ENCODE measurements at regions of chr5 and their contacts with region 1.

Region 1: DNA sequence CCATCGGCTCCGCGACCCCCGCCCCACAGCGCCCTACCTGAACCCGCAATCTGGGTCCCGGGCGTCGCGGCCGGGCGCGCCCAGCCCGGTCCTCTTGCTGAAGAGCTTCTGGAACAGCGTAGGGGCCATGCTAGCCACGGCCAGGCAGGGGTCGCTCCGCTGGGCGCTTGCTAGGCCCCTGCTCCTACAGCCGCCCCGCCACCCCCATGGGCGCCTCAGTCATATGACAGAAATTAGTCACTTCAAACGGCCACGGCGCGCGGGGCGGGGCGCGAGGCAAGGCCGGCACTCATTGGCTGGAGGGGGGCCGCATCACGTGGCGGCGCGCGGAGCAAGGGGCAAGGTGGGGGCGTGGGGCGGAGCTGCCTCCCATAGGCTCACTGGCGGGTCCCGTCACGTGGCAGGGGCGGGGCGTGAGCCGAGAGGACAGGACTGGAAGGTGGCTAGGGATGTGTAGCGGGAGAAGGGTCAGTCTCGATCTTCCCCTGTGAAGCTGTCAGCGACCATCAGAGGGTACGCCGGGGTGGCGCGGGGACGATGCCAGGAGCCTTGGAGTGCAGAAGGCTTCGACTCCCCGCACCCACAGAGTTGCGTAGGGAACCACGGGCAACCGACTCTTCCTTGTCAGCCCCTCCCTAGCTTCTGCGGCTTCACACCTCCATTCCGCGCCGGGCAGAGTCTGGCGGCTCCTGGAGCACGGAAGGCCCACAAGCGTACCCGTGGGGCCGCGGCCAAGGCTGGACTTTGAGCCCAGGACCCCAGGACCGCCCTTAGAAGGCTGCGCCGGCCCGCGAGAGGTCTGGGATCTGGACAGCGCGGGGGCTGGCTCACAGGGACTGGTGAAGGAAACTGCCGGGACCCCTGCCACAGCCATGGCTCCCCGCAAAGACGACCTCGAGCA is at the start of gene FNIP1:
- DNase-seq: peak; percentile 100
- H3K4me3 Mint-ChIP-seq: peak within 1 kb of the TSS; percentile 99
- H3K27ac Mint-ChIP-seq: peak within 1 kb of the TSS; percentile 95
- H3K4me1 Mint-ChIP-seq: peaks cover 30% of the 10 kb centered on the region
- H3K27me3 Mint-ChIP-seq: peaks cover 8% of the 10 kb centered on the region
- total RNA-seq, gene FNIP1: 15.8 and 17.5 TPM in 2 replicates

Region 2: DNA sequence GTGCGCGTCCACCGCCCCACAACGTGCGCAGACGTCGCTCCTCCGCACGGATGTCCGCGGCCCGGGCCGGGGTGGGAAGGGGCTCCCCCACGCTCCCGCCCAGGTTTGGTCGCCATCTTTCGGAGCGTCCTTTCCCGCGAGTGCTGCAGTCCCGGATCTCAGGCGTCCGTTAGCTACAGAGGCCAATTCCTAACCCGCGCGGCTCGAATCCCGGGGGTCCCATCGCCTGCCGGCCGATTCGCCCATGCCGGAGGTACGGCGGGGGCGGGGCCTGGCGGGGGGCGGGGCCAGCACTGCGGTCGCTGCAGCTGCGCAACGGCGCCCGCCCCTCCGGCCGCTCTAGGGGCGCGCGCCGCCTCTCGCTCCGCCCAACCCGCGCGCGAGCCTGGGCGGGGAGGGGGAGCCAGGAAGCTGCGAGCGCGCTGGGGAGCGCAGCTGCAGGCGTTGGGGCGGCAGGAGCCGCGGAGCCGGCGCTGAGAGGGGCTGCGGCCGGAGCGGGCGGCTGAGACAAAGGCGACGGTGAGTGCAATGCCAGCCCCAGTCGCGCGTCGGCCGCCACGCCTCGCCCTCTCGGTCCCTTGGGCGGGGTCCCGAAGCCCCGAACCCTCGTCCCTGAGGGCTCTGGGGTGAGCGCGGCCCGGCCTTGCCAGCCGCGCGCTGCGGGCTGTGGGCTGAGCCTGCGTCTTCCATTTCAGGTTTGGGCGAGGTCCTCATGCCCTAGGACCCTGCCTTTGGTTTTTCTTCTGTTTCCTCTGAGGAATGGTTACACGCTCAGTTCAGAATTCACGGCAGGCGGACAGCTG is 533.2 kb before region 1 on chr5 and contains the start of gene CDC42SE2:
- intact Hi-C with region 1: loop called (anchors 5 kb)
- DNase-seq: peak; percentile 97
- H3K4me3 Mint-ChIP-seq: peak within 1 kb of the TSS; percentile 85
- H3K27ac Mint-ChIP-seq: peak within 1 kb of the TSS; percentile 93
- H3K4me1 Mint-ChIP-seq: peaks cover 34% of the 10 kb centered on the region
- H3K27me3 Mint-ChIP-seq: no peaks in the 10 kb centered on the region
- total RNA-seq, gene CDC42SE2: 96.2 and 99.0 TPM in 2 replicates

Region 3: GRCh38 chr5:131536211-131536826 is 260.7 kb before region 1 on chr5:
- intact Hi-C with region 1: loop called (anchors 1 kb)
- DNase-seq: peak; percentile 72
- H3K4me3 Mint-ChIP-seq: peak overlapping the region; percentile 65
- H3K27ac Mint-ChIP-seq: peak overlapping the region; percentile 79
- H3K4me1 Mint-ChIP-seq: peaks cover 61% of the 10 kb centered on the region
- H3K27me3 Mint-ChIP-seq: no peaks in the 10 kb centered on the region

Region 4: DNA sequence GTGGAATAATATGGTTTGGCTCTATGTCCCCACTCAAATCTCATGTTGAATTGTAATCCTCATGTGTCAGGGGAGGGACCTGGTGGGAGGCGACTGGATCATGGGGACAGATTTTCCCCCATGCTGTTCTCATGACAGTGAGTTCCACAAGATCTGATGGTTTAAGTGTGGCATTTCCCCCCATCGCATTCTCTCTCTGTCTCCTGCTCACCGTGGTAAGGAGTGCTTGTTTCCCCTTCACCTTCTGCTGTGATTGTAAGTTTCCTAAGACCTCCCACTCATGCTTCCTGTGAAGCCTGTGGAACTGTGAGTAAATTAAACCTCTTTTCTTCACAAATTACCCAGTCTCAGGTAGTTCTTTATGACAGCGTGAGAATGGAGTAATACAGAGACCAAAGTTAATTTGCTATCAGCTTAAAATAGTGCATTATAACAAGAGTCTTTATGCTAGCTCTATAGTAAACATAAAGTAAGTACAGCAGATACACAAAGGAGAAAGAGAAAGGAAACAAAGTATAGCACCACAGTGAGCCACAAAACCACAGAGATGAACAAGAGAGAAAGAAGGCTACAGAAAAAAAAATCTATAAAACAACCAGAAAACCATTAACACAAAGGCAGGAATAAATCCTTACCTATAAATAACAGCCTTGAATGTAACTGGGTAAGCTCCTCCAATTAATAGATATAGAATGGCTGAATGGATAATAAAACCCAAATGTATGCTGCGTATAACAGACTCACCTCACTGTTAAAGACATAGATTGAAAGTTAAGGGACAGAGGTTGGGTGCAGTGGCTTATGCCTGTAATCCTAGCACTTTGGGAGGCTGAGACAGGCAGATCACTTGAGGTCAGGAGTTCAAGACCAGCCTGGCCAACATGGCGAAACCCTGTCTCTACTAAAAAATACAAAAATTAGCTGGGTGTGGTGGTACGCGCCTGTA is 201.7 kb before region 1 on chr5:
- intact Hi-C with region 1: loop called (anchors 2 kb)
- DNase-seq: peak; percentile 73
- H3K4me3 Mint-ChIP-seq: peak overlapping the region; percentile 55
- H3K27ac Mint-ChIP-seq: peak overlapping the region; percentile 73
- H3K4me1 Mint-ChIP-seq: peaks cover 43% of the 10 kb centered on the region
- H3K27me3 Mint-ChIP-seq: no peaks in the 10 kb centered on the region

Region 5: DNA sequence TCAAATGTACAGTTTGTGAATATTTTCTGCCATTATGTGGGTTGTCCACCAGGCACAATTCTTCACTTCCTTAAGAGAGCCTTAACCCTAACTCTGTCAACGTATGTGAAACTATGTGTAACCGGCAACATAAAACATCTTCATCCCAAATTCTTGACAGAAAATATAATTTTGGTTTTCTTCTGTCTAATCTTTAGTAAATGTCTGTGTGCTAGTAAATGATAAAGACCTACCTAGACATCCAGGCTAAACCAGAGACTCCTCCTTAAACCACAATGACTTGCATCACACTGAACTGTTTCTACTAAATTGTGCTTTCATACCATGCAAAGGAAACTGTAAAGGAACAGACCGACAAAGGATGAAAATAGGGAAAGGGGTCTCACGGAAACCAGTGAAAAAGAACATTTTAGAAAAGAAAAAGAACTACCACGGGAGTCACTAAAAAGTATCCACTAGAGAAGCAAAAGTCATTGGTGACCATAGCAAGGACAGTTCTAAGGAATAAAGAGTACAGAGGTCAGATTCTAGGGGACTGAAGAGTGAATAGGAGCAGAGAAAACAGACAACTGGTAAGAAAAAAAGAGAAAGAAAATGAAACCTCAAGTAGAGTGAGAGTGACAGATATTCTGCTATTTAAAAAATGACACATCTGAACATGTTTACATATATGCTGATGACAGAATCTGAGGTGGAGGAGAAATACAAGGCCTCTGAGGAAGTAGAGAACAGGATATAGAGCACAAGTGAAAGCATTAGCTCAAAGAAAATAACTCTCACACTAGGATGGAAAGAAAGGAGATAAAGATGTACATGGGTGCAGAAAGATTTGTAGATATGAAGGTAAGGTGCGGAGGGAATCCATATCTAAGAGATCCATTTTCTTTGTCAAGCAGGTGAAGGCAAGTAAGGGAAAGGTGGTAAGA is 49.6 kb before region 1 on chr5:
- intact Hi-C with region 1: loop called (anchors 2 kb)
- DNase-seq: peak; percentile 75
- H3K4me3 Mint-ChIP-seq: peak overlapping the region; percentile 50
- H3K27ac Mint-ChIP-seq: peak overlapping the region; percentile 79
- H3K4me1 Mint-ChIP-seq: peaks cover 33% of the 10 kb centered on the region
- H3K27me3 Mint-ChIP-seq: no peaks in the 10 kb centered on the region

Region 6: DNA sequence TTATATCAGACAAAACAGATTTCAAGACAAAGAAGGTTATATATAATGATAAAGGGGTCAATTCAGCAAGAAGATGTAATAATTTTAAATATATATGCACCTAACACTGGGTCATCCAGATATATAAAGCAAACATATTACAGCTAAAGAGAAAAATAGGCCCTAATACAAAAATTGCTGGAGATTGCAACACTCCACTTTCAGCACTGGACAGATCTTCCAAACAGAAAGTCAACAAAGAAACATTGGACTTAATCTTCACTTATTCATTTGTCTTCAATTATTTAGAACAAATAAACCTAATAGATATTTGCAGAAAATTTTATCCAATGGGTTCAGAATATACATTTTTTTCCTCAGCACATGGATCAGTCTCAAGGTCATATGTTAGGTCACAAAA is 102.6 kb after region 1 on chr5:
- intact Hi-C with region 1: no loop called
- DNase-seq: no peak
- H3K4me3 Mint-ChIP-seq: no peak overlapping the region
- H3K27ac Mint-ChIP-seq: no peak overlapping the region
- H3K4me1 Mint-ChIP-seq: peaks cover 13% of the 10 kb centered on the region
- H3K27me3 Mint-ChIP-seq: peaks cover 7% of the 10 kb centered on the region

Region 7: DNA sequence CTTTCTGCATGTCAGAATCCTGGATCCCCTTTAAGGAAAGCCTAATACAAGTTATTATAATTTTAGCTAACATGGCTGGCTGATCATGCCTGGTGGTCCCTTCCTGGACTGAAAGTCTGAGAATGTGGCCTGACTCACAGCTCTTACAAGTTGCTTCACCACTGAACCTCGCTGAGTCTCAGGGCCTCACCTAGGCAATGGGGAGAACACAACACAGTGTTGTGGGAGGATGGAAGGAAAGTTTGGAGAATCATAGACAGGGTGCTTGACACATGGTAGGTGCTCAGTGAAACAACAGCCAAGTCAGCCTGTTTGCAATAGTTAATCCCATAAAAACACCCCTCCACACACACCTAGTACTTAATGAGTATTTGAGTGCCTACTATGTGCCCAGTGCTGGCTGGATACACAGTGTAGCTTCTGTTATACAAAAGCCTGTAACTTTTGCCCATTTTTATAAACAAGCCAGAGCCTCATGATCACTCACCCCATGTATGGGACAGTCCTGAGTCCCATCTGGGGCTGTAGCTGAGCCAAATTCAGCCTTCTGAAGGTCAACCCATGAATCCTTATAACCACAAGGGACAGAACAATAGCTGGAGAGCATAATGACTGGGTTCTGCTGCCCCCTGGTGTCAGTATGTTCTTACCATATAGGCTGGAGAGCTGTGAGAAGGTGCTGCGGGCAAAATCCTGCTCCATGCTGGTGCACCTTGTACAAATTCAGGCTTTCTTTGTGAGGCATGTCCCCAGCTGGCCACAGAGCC is 210.5 kb after region 1 on chr5:
- intact Hi-C with region 1: loop called (anchors 5 kb)
- DNase-seq: peak; percentile 93
- H3K4me3 Mint-ChIP-seq: peak overlapping the region; percentile 45
- H3K27ac Mint-ChIP-seq: peak overlapping the region; percentile 71
- H3K4me1 Mint-ChIP-seq: peaks cover 39% of the 10 kb centered on the region
- H3K27me3 Mint-ChIP-seq: peaks cover 37% of the 10 kb centered on the region

Region 8: GRCh38 chr5:132866342-132867045 is 1069.5 kb after region 1 on chr5 and contains the starts of genes GDF9 and UQCRQ:
- intact Hi-C with region 1: loop called (anchors 5 kb)
- DNase-seq: peak; percentile 98
- H3K4me3 Mint-ChIP-seq: peak within 1 kb of the TSS; percentile 95
- H3K27ac Mint-ChIP-seq: peak within 1 kb of the TSS; percentile 99
- H3K4me1 Mint-ChIP-seq: peaks cover 24% of the 10 kb centered on the region
- H3K27me3 Mint-ChIP-seq: peaks cover 9% of the 10 kb centered on the region
- total RNA-seq, gene GDF9: 0.30 and 0.45 TPM in 2 replicates
- total RNA-seq, gene UQCRQ: 454 and 464 TPM in 2 replicates

Measured in activated CD4-positive, alpha-beta T cell treated with anti-CD3 and anti-CD28 coated beads, Interleukin-2, amount 10 ng/mL, durations not matched to agents 24 days and 14 days (primary cell).